A673 (cell line): ENCODE measurements at regions of chr19 and their contacts with region 1.

Region 1: DNA sequence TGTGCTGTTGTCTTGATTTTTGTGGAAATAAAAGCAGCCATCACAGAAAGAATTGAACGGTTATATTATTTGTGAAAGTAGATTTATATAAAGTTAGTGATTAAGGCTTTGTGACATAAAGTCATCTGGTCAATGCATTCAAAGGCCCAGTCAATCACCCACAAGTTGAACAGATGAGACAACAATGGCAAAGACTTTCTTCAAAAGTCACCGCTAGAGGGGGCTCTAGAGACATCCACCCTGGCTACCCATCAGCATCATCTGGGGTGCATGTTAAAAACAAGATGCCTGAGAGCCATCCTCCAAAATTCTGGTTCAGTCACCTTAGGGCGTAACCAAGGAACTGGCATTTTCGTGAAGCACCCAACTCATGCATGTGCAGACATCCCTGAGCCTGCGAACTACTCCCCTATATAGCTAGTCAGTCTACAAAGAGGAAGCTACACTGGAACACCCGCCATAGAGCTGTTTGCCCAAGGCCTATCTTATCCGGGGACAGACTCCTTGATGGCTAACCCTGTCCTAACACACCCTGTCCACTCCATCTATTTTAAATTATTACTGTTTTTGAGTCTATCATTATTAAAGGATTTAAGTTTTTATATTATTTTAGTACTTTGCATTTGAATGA is 970.5 kb downstream of the UQCRFS1 start:
- DNase-seq: peak; percentile 43
- H3K4me3 ChIP-seq: no peak overlapping the region
- H3K27ac ChIP-seq: no peak overlapping the region
- H3K4me1 ChIP-seq: no peaks in the 10 kb centered on the region
- H3K27me3 ChIP-seq: no peaks in the 10 kb centered on the region
- CTCF ChIP-seq: peak; percentile 59

Region 2: DNA sequence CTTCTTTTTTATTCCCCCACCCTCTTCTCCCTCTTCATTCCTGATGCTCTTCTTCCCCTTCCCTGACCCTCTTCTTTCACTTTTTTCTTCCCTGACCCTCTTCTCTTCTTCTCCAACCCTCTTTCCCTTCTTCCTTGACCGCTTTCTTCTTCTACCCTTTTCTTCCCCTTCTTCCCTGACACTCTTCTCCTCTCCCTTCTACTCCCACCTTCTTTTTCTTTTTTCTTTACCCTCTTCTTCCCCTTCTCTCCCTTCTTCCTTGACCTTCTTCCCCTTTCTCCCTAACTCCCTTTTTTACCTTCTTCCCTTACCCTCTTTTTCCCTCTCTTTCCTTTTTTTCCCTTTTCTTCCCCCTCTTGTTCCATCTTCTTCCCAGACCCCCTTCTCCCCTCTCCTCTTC is 39.3 kb after region 1 on chr19:
- CTCF ChIA-PET with region 1: no interaction called
- POLR2A ChIA-PET with region 1: no interaction called
- intact Hi-C with region 1: no loop called
- DNase-seq: no peak
- H3K4me3 ChIP-seq: no peak overlapping the region
- H3K27ac ChIP-seq: no peak overlapping the region
- H3K4me1 ChIP-seq: no peaks in the 10 kb centered on the region
- H3K27me3 ChIP-seq: no peaks in the 10 kb centered on the region
- CTCF ChIP-seq: no peak

Region 3: GRCh38 chr19:28324275-28325060 is 82.1 kb after region 1 on chr19:
- CTCF ChIA-PET with region 1: no interaction called
- POLR2A ChIA-PET with region 1: no interaction called
- intact Hi-C with region 1: loop called (anchors 5 kb)
- DNase-seq: no peak
- H3K4me3 ChIP-seq: no peak overlapping the region
- H3K27ac ChIP-seq: no peak overlapping the region
- H3K4me1 ChIP-seq: no peaks in the 10 kb centered on the region
- H3K27me3 ChIP-seq: no peaks in the 10 kb centered on the region
- CTCF ChIP-seq: no peak; the same call in 1 of the 2 replicates

Region 4: DNA sequence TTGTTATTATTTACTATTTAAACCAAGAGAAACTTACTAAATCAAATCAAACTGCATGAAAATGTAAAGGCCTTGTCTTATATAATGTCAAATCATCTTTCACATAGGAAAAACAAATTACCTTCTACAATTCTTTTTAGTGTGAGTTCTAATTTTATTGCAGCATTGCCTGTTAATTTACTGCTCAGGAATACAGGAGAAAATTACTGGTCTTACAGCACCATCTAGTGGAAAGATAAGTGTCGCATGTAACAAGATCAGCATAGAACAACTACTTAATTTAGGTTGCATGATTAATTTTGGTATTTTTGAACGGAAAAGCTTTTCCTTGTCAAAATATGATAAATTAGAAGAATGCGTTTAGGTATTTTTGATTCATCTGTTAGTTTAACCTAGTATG is 467.9 kb after region 1 on chr19:
- CTCF ChIA-PET with region 1: no interaction called
- POLR2A ChIA-PET with region 1: no interaction called
- intact Hi-C with region 1: loop called (anchors 10 kb)
- DNase-seq: peak; percentile 65
- H3K4me3 ChIP-seq: no peak overlapping the region
- H3K27ac ChIP-seq: no peak overlapping the region
- H3K4me1 ChIP-seq: no peaks in the 10 kb centered on the region
- H3K27me3 ChIP-seq: no peaks in the 10 kb centered on the region
- CTCF ChIP-seq: peak; percentile 73